ENCODE measurements at regions of chr13 and their contacts with region 1.

Region 1: GRCh38 chr13:42686165-42686564 is 95.2 kb upstream of the FAM216B start:
- DNase-seq: no peak
- ATAC-seq: no peak
- H3K4me3 ChIP-seq: no peak overlapping the region
- H3K27ac ChIP-seq: no peak overlapping the region
- H3K4me1 ChIP-seq: no peaks in the 10 kb centered on the region
- CTCF ChIP-seq: no peak
- EP300 ChIP-seq: no peak
- POLR2A ChIP-seq: no peak
- RAD21 ChIP-seq: no peak

Region 2: DNA sequence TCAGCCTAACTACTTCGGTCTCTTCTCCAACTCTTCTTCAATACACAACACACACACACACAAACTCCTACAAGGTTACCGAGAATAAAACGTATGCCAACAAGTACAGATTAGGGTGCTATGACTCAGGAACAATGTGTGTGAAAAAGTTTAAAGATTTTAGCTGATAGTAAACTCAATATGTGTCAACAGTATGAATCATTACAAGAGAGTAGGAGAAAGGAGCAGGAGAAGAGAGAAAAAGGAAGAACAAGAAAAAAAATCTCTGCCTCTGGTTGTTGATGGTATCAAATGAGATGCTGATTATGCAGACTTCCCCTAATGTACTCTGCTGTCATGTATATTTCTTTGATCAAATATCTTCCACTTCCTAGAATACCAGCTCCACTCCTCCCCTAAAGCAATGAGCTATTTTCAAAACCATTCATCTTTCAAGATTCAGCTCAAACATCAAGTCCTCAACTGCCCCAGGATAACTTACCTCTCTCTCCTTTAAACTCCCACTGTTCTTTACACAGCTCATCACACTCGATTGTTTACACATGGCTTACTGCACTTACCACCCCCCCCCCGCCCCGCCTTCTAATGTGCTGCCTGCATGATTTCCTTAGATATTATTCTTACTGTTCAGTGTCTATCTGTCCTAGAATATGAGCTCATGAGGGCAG is 190.9 kb after region 1 on chr13:
- CTCF ChIA-PET with region 1: no interaction called
- POLR2A ChIA-PET with region 1: interaction called, 17 read pairs
- DNase-seq: no peak
- ATAC-seq: no peak
- H3K4me3 ChIP-seq: no peak overlapping the region
- H3K27ac ChIP-seq: no peak overlapping the region
- H3K4me1 ChIP-seq: peaks cover 6% of the 10 kb centered on the region; the same call in 1 of the 3 replicates
- CTCF ChIP-seq: no peak
- EP300 ChIP-seq: no peak
- POLR2A ChIP-seq: no peak
- RAD21 ChIP-seq: no peak

Measured in A549 (cell line).